Activated CD8-positive, alpha-beta T cell treated with anti-CD3 and anti-CD28 coated beads, Interleukin-2, amount 10 ng/mL, durations not matched to agents 7 days and 5 days (primary cell): ENCODE measurements at regions of chr6 and their contacts with region 1.

Region 1: DNA sequence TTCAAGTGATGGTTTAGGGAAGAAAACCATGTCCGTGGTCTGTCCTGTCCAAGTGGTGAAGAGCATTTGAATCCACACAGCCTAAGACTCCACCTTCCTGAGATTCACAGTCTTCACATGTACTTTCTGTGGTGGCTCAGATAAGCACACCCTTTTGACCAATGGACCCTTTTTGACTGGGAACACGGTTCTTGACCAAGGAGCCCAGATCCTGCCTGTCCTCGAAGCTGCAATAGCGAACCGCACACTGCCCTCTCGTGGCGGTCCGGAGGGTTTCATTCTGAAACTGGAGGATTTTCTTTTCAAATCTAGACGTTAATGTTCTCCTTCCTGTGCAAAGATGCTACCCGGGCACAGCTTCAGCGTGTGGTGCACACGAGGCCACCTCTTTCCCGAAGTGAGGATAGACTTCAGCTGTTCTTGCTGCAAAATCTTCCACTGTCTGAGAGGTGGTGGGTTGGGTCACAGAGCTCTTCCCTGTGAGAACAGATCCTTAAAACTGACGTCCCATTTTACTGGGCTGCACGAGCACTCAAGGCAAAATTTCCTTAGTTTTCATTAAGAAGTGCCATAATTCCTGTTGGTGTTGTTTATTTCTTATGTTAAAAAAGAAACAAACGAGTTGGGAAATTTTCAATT is 90.5 kb downstream of the SYNJ2 start:
- DNase-seq: peak; percentile 82
- ATAC-seq: peak; percentile 70
- H3K4me3 Mint-ChIP-seq: no peak overlapping the region
- H3K27ac Mint-ChIP-seq: peak overlapping the region; percentile 70
- H3K4me1 Mint-ChIP-seq: peaks cover 38% of the 10 kb centered on the region
- H3K27me3 Mint-ChIP-seq: no peaks in the 10 kb centered on the region

Region 2: GRCh38 chr6:156988276-156989158 is 1083.7 kb before region 1 on chr6:
- CTCF ChIA-PET with region 1: no interaction called
- POLR2A ChIA-PET with region 1: no interaction called
- DNase-seq: no peak
- ATAC-seq: no peak
- H3K4me3 Mint-ChIP-seq: no peak overlapping the region
- H3K27ac Mint-ChIP-seq: peak overlapping the region; percentile 2
- H3K4me1 Mint-ChIP-seq: peaks cover 28% of the 10 kb centered on the region
- H3K27me3 Mint-ChIP-seq: no peaks in the 10 kb centered on the region

Region 3: GRCh38 chr6:157981395-157982296 is 90.6 kb before region 1 on chr6 and contains the start of gene SYNJ2:
- CTCF ChIA-PET with region 1: interaction called, 31 read pairs
- POLR2A ChIA-PET with region 1: no interaction called
- DNase-seq: peak; percentile 91
- ATAC-seq: peak; percentile 94
- H3K4me3 Mint-ChIP-seq: peak within 1 kb of the TSS; percentile 95
- H3K27ac Mint-ChIP-seq: peak within 1 kb of the TSS; percentile 86
- H3K4me1 Mint-ChIP-seq: peaks cover 78% of the 10 kb centered on the region
- H3K27me3 Mint-ChIP-seq: peaks cover 13% of the 10 kb centered on the region
- total RNA-seq, gene SYNJ2: 38.2 to 38.5 TPM

Region 4: DNA sequence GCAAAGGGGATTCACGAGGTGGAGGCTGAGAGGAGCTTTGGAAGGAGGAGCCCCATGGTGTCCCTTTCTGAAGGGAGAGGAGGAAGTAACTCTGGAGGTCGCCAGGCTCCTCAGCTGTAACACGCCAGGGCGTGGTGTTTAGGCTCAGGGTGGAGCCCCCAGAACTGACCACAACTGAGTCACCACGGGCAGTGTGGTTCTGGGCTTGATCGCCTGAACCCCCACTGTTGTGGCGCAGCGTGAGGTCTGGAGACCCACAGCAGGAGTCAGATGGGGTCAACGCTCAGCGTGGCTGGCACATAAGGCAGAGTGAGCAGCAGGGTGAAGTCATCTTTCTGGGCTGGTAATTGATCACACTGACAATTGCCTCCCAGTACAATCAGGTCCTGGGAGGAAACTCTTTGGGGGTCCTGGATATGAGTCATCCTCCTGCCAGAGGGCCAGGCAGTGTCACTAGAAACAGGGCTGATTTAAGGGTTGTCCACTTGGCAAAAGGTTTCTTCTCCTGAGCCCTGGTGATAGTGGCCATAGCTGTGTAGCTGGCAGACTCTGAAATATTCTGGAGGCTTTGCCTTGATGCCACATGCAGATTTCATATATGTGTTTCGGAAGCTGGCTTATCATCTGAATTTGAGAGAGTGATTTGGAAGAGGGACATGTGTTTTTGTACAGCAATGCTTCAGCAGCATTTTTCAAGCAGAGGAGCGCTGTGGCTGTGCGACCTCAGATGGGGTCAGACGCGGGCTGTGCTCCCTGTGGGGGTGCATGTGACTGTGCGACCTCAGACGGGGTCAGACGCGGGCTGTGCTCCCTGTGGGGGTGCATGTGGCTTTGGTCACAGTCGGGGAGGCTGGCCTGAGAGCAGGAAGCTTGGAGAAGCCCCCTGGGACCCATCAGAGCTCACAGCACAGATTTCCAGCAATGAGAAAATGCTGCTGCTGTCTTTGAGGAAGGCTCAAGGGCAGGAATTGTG is 40.5 kb before region 1 on chr6:
- CTCF ChIA-PET with region 1: interaction called, 37 read pairs
- POLR2A ChIA-PET with region 1: interaction called, 6 read pairs
- DNase-seq: peak; percentile 79
- ATAC-seq: peak; percentile 52
- H3K4me3 Mint-ChIP-seq: peak overlapping the region; percentile 43
- H3K27ac Mint-ChIP-seq: peak overlapping the region; percentile 84
- H3K4me1 Mint-ChIP-seq: peaks cover 48% of the 10 kb centered on the region
- H3K27me3 Mint-ChIP-seq: no peaks in the 10 kb centered on the region

Region 5: DNA sequence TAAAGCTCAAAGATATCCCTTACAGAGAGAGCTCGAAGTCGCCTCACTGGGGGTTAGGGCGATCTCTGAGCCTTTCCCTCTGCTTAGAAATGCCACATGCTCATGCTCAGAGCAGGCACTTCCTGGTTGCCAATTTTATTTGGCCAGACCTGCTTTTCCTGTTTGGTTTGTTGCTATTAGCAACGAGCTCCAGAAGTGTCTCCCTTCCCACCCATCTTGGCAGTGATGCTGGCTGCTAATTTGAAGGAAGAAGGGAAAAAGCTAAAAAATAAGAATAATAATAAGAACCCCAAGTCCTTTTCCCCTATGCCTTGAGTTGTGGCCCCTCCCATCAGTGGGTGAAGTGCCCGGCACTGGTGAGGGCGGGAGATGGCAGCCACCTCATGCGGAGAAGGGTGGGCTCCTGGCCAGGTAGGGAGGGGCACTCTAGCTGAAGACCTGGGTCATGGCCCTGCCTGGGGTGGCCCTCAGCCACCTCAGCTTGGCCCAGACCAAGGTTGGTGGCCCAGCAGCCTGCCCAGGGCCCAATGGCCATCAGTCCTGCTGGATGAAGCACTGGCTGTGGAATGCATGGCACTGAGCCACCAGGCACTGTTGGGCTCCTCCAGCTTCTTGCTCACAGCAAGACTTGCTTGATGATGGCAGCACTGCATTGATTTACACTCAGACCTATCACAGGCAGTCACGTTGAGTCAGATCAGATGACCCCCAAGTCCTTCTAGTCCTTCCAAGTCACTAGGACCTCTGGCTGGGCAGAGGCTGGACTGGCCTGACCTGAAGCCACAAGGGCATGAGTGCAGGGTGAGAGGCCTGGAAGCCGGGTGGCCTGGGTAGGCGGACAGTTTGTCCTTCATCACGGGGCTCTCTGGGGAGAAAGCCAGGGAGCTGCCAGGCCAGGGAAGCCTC is 11.5 kb before region 1 on chr6:
- CTCF ChIA-PET with region 1: interaction called, 26 read pairs
- POLR2A ChIA-PET with region 1: interaction called, 3 read pairs
- DNase-seq: no peak
- ATAC-seq: peak; percentile 59
- H3K4me3 Mint-ChIP-seq: no peak overlapping the region
- H3K27ac Mint-ChIP-seq: peak overlapping the region; percentile 72
- H3K4me1 Mint-ChIP-seq: peaks cover 32% of the 10 kb centered on the region
- H3K27me3 Mint-ChIP-seq: no peaks in the 10 kb centered on the region

Region 6: GRCh38 chr6:158118886-158119285 is 46.7 kb after region 1 on chr6:
- CTCF ChIA-PET with region 1: interaction called, 10 read pairs
- POLR2A ChIA-PET with region 1: no interaction called
- DNase-seq: no peak
- ATAC-seq: no peak
- H3K4me3 Mint-ChIP-seq: no peak overlapping the region
- H3K27ac Mint-ChIP-seq: no peak overlapping the region
- H3K4me1 Mint-ChIP-seq: no peaks in the 10 kb centered on the region
- H3K27me3 Mint-ChIP-seq: no peaks in the 10 kb centered on the region

Region 7: DNA sequence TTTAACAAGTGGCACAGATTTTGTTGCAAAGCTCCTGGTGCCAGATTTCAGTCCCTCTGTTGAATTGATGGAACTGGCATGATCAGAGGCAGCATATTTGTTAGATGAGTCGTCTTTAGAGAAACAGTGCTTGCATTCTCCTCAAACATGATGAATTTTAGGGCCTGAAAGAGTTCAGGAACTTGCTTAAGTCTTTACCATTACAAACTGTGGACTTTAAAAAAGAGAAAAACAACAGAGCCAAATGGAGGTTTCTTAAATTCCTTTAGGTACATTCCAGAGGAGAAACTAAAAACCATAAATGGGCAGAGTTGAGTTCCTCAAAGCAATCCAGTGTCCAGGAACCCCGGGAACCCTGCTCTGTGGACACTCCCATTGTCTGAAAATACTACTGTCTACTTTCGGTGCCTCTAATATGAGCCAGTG is 98.5 kb after region 1 on chr6:
- CTCF ChIA-PET with region 1: no interaction called
- POLR2A ChIA-PET with region 1: no interaction called
- DNase-seq: no peak
- ATAC-seq: no peak
- H3K4me3 Mint-ChIP-seq: no peak overlapping the region
- H3K27ac Mint-ChIP-seq: no peak overlapping the region
- H3K4me1 Mint-ChIP-seq: peaks cover 9% of the 10 kb centered on the region
- H3K27me3 Mint-ChIP-seq: no peaks in the 10 kb centered on the region